Caco-2 (cell line): ENCODE measurements at regions of chr1 and their contacts with region 1.

Region 1: DNA sequence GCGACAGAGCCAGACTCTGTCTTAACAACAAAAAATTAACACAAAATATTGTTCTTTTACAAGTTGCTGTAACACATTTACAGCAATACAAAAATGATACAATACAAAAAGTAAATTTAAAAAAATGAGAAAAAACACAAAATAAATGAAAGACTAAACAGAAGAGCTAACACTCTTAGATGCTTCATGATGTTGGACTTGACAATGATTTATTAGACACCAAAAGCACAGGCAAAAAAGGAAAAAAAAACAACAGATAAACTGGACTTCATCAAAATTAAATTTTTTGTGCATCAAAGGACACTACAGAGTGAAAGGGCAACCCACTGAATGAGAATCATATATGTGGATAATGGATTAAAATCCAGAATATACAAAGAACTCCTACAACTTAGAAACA is 16.4 kb downstream of the GATAD2B start:
- DNase-seq: no peak
- H3K4me3 ChIP-seq: no peak overlapping the region
- H3K4me3 Mint-ChIP-seq: no peak overlapping the region
- H3K27ac Mint-ChIP-seq: no peak overlapping the region
- H3K4me1 ChIP-seq: no peaks in the 10 kb centered on the region
- H3K4me1 Mint-ChIP-seq: peaks cover 6% of the 10 kb centered on the region
- H3K27me3 ChIP-seq: no peaks in the 10 kb centered on the region
- H3K27me3 Mint-ChIP-seq: no peaks in the 10 kb centered on the region
- CTCF ChIP-seq: no peak

Region 2: DNA sequence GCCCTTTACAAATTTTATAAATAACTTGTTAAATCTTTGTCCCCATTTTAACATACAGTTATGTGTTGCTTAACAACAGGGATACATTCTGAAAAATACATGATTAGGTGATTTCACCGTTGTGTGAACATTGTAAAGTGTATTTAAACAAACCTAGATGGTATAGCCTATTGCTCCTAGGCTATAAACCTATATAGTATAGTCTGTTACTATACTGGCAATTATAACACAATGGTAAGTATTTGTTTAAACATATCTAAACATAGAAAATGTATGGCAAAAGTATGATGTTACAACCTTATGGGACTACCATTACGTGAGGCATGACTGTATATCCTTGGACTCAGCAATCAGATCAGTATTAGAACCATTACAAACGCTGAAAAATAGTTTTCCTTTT is 20.3 kb before region 1 on chr1:
- CTCF ChIA-PET with region 1: no interaction called
- POLR2A ChIA-PET with region 1: interaction called, 17 read pairs
- intact Hi-C with region 1: no loop called
- DNase-seq: no peak
- H3K4me3 ChIP-seq: no peak overlapping the region
- H3K4me3 Mint-ChIP-seq: no peak overlapping the region
- H3K27ac Mint-ChIP-seq: no peak overlapping the region
- H3K4me1 ChIP-seq: no peaks in the 10 kb centered on the region
- H3K4me1 Mint-ChIP-seq: no peaks in the 10 kb centered on the region
- H3K27me3 ChIP-seq: no peaks in the 10 kb centered on the region
- H3K27me3 Mint-ChIP-seq: no peaks in the 10 kb centered on the region
- CTCF ChIP-seq: no peak